ENCODE measurements at regions of chr20 and their contacts with region 1.

Region 1: GRCh38 chr20:38165089-38165989 is at the start of gene TGM2:
- DNase-seq: peak; percentile 93
- ATAC-seq: peak; percentile 83
- total RNA-seq, gene TGM2: 581 TPM

Region 2: DNA sequence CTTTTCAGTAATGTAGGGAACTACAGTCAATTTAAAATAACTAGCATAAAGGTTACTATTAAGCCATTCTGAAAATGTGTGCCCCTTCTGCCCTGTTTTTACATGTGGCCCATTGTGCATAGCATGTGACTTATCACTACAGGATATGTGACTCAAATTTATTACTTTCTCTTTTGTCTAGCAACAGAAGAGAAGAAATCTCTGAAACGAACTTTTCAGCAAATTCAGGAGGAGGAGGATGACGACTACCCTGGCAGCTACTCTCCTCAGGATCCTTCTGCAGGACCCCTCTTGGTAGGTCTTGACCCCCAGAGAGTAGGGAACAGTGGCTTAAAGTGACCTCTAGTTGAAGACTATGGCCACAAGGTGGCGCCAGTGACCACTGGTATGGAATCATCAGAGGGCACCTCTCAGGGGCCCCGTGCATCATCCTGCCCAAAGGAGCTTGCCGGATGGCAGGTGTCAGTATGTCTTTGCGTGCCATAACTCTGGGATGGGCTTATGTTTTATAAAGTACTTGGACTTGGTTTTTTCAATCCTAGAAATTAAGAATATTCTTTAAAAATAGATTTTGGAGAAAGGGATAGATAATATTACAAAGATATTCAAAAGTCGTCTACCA is 107.9 kb before region 1 on chr20:
- intact Hi-C with region 1: loop called (anchors 2 kb)
- DNase-seq: peak; percentile 95
- ATAC-seq: peak; percentile 90

Region 3: GRCh38 chr20:38196592-38196991 is 31.3 kb after region 1 on chr20:
- intact Hi-C with region 1: no loop called
- DNase-seq: peak; percentile 92
- ATAC-seq: peak; percentile 94

Measured in Right ventricle myocardium inferior (tissue), 1 donor.